Activated T-helper 1 cell treated with anti-CD3 and anti-CD28 coated beads, Interleukin-12 subunit alpha, Interleukin-12 subunit beta, Interleukin-2, Interleukin-4 antibody, amounts not matched to agents 30 ng/mL and 10 ng/mL and 1 ng/mL, durations not matched to agents 14 hours and 24 hours and 36 hours (primary cell): ENCODE measurements at regions of chrX and their contacts with region 1.

Region 1: GRCh38 chrX:65985922-65986588 is 53.8 kb downstream of the VSIG4 start:
- DNase-seq: peak; percentile 37
- H3K4me3 Mint-ChIP-seq: peak overlapping the region; percentile 5
- H3K27ac Mint-ChIP-seq: peak overlapping the region; percentile 83
- H3K4me1 Mint-ChIP-seq: peaks cover 21% of the 10 kb centered on the region
- H3K27me3 Mint-ChIP-seq: peaks cover 2% of the 10 kb centered on the region

Region 2: DNA sequence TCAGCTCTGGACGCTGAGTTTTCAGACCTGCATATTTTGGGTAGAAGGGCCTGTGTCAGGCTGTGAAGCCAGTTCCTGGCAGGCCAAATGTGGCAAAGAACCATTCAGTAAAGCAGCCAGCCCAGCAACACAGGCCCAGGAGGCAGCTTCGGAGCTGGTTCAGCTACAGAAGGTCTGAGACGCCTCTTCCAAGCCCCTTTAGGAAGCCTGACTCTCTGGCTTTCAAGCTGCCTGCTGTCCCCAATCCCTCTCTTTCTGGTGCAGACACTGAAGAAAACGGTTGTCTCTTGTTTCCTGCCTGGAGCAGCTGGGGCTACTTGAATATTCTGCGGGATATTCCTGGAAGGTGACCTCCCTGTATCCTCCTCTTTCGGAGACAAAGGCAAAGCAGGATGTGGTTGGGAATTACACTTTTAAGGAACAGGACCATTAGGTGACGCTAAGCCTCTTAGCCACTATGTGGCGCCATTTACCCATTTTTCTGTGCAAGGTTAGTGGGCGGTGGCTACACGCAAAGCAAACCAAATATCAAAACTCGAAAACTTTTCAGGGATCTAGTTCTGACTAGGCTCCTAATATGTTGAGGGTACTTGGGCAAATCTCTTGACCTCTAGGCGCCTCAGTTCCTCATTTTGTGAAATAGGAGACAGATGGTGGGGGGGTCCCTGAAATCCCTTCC is 404.3 kb before region 1 on chrX:
- intact Hi-C with region 1: loop called (anchors 1 kb)
- DNase-seq: peak; percentile 27
- H3K4me3 Mint-ChIP-seq: no peak overlapping the region
- H3K27ac Mint-ChIP-seq: no peak overlapping the region
- H3K4me1 Mint-ChIP-seq: peaks cover 14% of the 10 kb centered on the region
- H3K27me3 Mint-ChIP-seq: no peaks in the 10 kb centered on the region

Region 3: GRCh38 chrX:65677954-65678469 is 308.0 kb before region 1 on chrX:
- intact Hi-C with region 1: loop called (anchors 2 kb)
- DNase-seq: no peak
- H3K4me3 Mint-ChIP-seq: peak overlapping the region; percentile 45
- H3K27ac Mint-ChIP-seq: peak overlapping the region; percentile 78
- H3K4me1 Mint-ChIP-seq: peaks cover 89% of the 10 kb centered on the region
- H3K27me3 Mint-ChIP-seq: no peaks in the 10 kb centered on the region

Region 4: GRCh38 chrX:65750674-65751469 is 235.2 kb before region 1 on chrX:
- intact Hi-C with region 1: loop called (anchors 2 kb)
- DNase-seq: peak; percentile 43
- H3K4me3 Mint-ChIP-seq: peak overlapping the region; percentile 56
- H3K27ac Mint-ChIP-seq: peak overlapping the region; percentile 55
- H3K4me1 Mint-ChIP-seq: peaks cover 60% of the 10 kb centered on the region
- H3K27me3 Mint-ChIP-seq: no peaks in the 10 kb centered on the region

Region 5: DNA sequence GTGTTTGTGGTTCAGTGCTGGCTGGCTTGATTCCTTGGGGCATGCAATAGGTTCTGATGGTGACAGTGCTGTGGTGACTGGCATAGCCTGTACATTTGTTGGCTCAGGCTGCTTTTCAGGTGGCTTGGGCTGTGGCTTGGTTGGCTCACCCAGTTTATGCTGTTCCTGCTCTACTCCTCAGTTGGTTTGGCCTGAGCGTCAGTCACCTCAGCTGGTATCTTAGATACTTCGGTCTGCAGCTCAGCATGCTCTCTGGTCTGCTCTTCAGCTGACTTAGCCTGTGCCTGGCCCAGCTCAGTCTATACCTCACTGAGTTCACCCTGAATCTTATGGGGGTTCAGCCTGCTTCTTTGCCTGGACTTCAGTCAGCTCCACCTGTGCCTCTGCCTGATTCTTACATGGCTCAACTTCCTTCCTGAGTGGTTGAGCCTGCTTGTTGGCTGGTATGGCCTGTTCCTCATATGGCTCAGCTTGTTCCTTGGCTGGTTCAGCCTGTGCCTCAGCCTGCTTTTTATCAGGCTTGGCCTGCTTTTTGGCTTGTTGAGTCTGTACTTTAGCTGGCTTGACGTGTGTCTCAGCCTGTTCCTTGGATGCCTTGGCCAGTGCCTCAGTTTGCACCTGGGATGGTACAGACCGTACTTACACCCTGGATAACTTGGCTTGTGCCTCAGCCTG is 148.0 kb before region 1 on chrX:
- intact Hi-C with region 1: no loop called
- DNase-seq: no peak
- H3K4me3 Mint-ChIP-seq: no peak overlapping the region
- H3K27ac Mint-ChIP-seq: no peak overlapping the region
- H3K4me1 Mint-ChIP-seq: peaks cover 11% of the 10 kb centered on the region
- H3K27me3 Mint-ChIP-seq: no peaks in the 10 kb centered on the region

Region 6: GRCh38 chrX:65926095-65927019 is 59.7 kb before region 1 on chrX:
- intact Hi-C with region 1: loop called (anchors 1 kb)
- DNase-seq: peak; percentile 39
- H3K4me3 Mint-ChIP-seq: peak overlapping the region; percentile 59
- H3K27ac Mint-ChIP-seq: peak overlapping the region; percentile 89
- H3K4me1 Mint-ChIP-seq: peaks cover 50% of the 10 kb centered on the region
- H3K27me3 Mint-ChIP-seq: no peaks in the 10 kb centered on the region

Region 7: DNA sequence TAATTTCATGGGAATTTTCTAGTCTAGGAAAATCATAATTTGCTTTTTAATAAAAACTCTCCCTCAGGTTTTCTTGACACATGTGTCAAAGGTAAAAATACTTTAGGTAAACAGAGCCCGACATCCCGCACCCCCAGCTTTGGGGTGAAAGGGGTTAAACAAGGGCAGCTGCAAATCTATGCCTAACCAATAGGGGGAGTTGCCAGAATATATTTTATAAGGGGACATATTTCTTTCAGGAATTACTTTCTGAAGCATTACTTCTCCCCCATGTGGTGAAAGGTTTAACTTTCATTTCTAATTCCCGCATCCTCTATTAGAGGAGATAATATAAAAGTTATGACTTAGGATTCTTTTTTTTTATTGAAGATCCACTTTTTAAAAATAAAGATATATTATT is 124.1 kb after region 1 on chrX:
- intact Hi-C with region 1: loop called (anchors 2 kb)
- DNase-seq: no peak
- H3K4me3 Mint-ChIP-seq: no peak overlapping the region
- H3K27ac Mint-ChIP-seq: no peak overlapping the region
- H3K4me1 Mint-ChIP-seq: peaks cover 8% of the 10 kb centered on the region
- H3K27me3 Mint-ChIP-seq: no peaks in the 10 kb centered on the region